PC-3 (cell line): ENCODE measurements at regions of chr12 and their contacts with region 1.

Region 1: GRCh38 chr12:94571556-94571955 is 78.8 kb downstream of the TMCC3 start:
- DNase-seq: peak; percentile 96
- ATAC-seq: peak; percentile 59
- H3K4me3 ChIP-seq: no peak overlapping the region
- H3K27ac ChIP-seq: peak overlapping the region; percentile 25
- H3K4me1 ChIP-seq: peaks cover 32% of the 10 kb centered on the region
- H3K27me3 ChIP-seq: no peaks in the 10 kb centered on the region
- CTCF ChIP-seq: no peak

Region 2: GRCh38 chr12:94532490-94533422 is 38.8 kb before region 1 on chr12:
- CTCF ChIA-PET with region 1: no interaction called
- POLR2A ChIA-PET with region 1: no interaction called
- intact Hi-C with region 1: no loop called
- DNase-seq: peak; percentile 79
- ATAC-seq: peak; percentile 95
- H3K4me3 ChIP-seq: no peak overlapping the region
- H3K27ac ChIP-seq: no peak overlapping the region
- H3K4me1 ChIP-seq: no peaks in the 10 kb centered on the region
- H3K27me3 ChIP-seq: no peaks in the 10 kb centered on the region
- CTCF ChIP-seq: peak; percentile 93

Region 3: GRCh38 chr12:94586589-94587259 is 15.2 kb after region 1 on chr12:
- CTCF ChIA-PET with region 1: no interaction called
- POLR2A ChIA-PET with region 1: no interaction called
- intact Hi-C with region 1: loop called (anchors 2 kb)
- DNase-seq: peak; percentile 64
- ATAC-seq: peak; percentile 75
- H3K4me3 ChIP-seq: no peak overlapping the region
- H3K27ac ChIP-seq: no peak overlapping the region
- H3K4me1 ChIP-seq: peaks cover 29% of the 10 kb centered on the region
- H3K27me3 ChIP-seq: no peaks in the 10 kb centered on the region
- CTCF ChIP-seq: no peak

Region 4: DNA sequence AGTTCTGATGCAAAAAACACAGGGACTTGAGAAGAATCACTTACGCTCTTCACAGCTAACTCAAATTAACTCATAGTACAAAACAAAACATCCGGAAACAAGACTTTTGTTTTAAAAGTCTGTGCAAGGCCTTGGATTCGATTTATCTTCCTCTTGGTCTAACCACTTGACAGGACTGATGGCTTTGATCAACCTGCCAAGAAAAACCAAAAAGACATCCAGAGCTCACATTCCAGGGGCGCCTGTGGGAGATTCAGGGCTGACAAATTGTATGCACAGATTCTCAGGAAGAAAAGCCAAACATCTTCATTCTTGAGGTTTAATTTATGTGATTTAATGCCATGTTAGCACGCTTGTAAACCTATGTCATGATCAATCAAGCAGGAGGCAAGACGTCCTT is 207.9 kb after region 1 on chr12:
- CTCF ChIA-PET with region 1: no interaction called
- POLR2A ChIA-PET with region 1: no interaction called
- intact Hi-C with region 1: no loop called
- DNase-seq: no peak
- ATAC-seq: no peak
- H3K4me3 ChIP-seq: no peak overlapping the region
- H3K27ac ChIP-seq: no peak overlapping the region
- H3K4me1 ChIP-seq: peaks cover 12% of the 10 kb centered on the region
- H3K27me3 ChIP-seq: no peaks in the 10 kb centered on the region
- CTCF ChIP-seq: no peak